Vagina (tissue), 2 donors: ENCODE measurements at regions of chr21 and their contacts with region 1.

Region 1: DNA sequence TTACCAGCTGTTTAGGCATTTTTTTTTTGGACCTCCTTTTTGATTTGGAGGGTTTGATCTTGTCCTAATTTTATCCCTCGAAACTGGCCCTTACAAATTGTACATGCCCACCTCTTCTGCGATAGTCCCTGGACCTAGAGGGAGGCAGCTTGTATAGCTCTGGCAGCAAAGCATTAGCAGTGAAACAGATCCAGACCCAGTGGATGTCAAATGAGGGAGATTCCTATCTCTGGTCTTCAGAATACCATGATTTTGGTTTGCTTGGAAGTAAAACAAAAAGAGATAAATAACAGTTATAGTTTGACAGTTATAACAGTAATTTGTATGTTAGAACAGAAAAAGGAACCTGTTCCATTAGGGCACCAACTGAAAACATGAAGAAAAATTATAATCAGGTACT is 123.6 kb downstream of the MIS18A start:
- DNase-seq: no peak
- H3K4me3 ChIP-seq: no peak overlapping the region
- H3K27ac ChIP-seq: no peak overlapping the region
- H3K4me1 ChIP-seq: no peaks in the 10 kb centered on the region
- H3K27me3 ChIP-seq: no peaks in the 10 kb centered on the region
- CTCF ChIP-seq: no peak
- POLR2A ChIP-seq: no peak

Region 2: DNA sequence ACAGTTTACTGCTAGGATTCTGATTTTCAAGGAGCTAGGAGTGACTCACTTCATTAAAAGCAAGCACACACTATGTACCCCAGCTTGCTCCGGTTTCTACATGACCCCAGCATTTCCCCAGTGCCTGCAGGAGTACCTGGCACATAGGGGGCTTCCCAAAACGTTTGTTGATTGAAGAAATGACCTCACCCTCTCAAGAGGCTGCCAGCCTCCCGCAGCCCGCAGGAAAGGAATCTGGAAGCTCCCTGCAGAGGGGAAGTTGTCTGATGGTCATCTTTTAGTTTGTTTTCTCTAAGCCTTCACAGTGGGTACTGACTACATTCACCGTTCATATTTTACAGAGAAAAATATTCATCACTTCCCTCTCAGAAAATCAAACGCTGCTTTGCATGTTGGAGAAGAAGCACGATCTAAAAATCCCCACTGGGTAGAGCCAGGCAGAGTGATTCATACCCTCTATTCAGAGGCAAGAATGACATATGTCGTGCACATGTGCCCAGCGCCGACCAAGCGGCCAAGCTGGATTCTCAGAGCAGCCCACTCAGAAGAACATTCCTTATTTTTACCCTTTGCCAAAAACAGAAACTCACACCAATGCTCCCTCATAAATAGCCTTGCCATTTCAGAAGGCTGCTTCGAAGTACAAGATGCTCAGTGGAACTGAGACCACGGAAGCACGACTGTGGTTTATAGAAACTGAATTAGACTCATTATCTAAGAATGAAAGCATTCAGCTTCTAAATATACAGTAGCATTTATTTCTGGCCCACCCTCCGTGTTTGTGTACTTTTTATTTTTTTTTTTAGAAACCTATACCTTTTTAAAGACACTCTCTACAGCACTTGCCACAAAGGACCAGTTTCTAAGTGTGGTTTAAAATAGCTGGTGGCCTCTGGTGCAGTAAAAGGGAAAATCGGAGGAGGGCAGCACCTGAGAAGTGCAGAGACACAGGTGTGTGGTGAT is 19.5 kb before region 1 on chr21:
- intact Hi-C with region 1: no loop called
- DNase-seq: no peak
- H3K4me3 ChIP-seq: no peak overlapping the region
- H3K27ac ChIP-seq: no peak overlapping the region
- H3K4me1 ChIP-seq: peaks cover 17% of the 10 kb centered on the region
- H3K27me3 ChIP-seq: no peaks in the 10 kb centered on the region
- CTCF ChIP-seq: no peak
- POLR2A ChIP-seq: no peak

Region 3: DNA sequence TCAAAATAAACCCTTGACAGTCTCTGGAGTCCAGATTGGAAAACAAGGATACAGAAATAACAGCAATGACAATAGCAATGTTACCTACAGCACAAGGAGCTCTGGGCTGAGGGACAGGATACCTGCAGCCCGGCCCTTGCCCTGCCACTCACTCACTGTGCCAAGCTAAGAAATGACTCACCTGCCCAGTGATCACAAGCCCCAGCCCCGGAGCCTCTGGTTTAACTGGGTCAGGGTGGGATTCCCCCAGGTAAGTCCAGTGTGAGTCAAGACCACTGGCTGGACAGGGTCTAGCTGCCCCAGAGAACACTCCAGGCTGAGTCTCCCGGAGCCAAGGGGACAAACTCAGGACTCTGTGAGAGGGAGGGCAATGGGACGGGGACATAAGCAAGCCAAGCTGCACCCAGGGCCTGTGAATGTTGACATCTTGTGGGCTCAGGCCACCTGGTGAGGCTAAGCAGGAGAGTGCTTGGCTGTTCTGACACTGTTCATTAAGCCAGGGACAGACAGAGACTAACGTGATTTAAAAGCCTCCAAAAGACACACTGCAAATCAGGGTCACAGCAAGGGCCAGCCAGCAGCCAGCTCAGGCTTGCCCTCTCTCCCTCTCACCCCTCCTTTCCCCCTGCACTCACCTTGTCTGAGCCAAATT is 59.6 kb after region 1 on chr21:
- intact Hi-C with region 1: loop called (anchors 10 kb)
- DNase-seq: peak in 1 of 2 donors; percentile 52
- H3K4me3 ChIP-seq: no peak overlapping the region
- H3K27ac ChIP-seq: no peak overlapping the region
- H3K4me1 ChIP-seq: no peaks in the 10 kb centered on the region
- H3K27me3 ChIP-seq: no peaks in the 10 kb centered on the region
- CTCF ChIP-seq: no peak
- POLR2A ChIP-seq: no peak